ENCODE measurements at regions of chr11 and their contacts with region 1.

Region 1: DNA sequence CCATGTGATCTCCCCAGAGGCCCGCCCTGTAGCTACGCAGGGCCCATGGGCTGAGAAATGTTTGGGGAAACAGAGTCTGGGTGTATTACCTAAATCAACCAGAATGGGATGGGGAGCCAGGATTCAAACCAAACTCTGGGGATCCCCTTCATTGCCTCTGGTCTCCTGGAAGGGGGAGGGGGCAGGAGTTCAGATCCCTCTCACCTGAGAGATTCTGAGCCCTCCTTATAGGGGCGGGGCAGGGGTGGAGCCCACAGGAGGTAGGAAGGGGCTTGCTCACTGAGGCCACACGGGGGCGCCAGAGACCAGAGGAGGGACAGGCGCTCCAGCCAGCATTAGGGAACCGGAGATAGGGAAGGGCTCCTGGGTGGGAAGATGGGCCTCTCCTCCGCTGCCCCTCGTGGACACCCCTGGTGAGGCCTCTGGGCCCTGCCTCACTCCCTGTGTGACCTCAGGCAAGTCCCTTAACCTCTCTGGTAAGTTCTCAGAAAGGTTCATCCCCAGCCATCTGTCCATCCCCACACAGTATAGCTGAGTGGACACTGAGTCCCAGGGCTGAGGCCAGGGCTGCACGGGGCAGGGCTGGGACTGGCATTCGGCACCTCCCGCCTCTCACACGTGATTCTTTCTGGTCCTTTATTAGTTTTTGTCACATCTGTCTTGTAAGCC is 2.7 kb upstream of the CDC42BPG start:
- DNase-seq: no peak
- ATAC-seq: peak; percentile 61
- H3K4me3 ChIP-seq: no peak overlapping the region
- H3K27ac ChIP-seq: no peak overlapping the region
- H3K4me1 ChIP-seq: peaks cover 55% of the 10 kb centered on the region
- H3K27me3 ChIP-seq: no peaks in the 10 kb centered on the region
- CTCF ChIP-seq: peak; percentile 86 to 97 (median 96)
- EP300 ChIP-seq: no peak
- POLR2A ChIP-seq: peak; percentile 36; the same call in 1 of the 2 replicates
- RAD21 ChIP-seq: peak; percentile 90

Region 2: GRCh38 chr11:64204464-64204989 is 642.6 kb before region 1 on chr11:
- CTCF ChIA-PET with region 1: no interaction called
- POLR2A ChIA-PET with region 1: no interaction called
- RAD21 ChIA-PET with region 1: no interaction called
- SMC1A ChIA-PET with region 1: no interaction called
- in situ Hi-C with region 1: no loop called
- intact Hi-C with region 1: no loop called
- DNase-seq: peak; percentile 52
- ATAC-seq: peak; percentile 43
- H3K4me3 ChIP-seq: no peak overlapping the region
- H3K27ac ChIP-seq: peak overlapping the region; percentile 3; the same call in 1 of the 2 replicates
- H3K4me1 ChIP-seq: peaks cover 26% of the 10 kb centered on the region
- H3K27me3 ChIP-seq: no peaks in the 10 kb centered on the region
- CTCF ChIP-seq: peak; percentile 73 to 92 (median 77)
- EP300 ChIP-seq: no peak
- POLR2A ChIP-seq: peak; percentile 34; the same call in 1 of the 2 replicates
- RAD21 ChIP-seq: peak; percentile 82

Region 3: DNA sequence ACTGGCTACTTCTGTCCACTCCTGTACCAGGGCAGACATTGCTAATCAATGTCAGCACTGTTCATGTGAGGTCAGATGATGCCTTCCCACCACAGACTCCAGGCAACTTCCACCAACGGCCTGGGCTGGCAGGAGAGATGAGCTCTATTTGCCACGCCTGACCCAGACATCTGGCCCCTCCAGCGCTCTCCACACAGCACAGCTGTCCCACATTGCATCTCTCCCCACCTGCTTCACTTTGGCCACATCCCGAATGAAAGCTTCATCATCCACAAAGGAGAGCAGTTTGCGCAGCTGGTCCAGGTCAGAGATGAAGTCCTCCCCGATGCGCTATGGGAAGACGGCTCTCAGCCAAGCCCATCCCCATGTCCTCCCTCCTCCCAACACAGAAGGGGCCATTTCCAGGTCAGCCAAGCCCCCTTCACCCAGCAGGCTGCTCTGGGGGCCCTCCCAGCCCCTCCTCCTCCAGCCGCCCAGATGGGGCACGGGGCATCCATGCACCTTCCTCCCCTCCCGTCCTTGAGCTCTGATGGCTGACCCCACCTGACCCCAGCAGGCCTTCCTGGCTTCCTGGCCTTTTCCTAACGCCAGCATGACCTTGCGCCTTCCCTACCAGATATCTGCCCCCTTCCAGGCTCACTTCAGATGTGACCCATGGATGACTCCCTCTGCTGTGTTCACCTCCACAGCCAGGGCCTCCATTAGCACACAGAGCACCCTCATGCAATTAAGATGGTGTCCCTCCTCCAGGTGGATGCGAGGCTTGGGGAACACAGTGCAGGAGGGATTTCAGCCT is 94.8 kb before region 1 on chr11:
- CTCF ChIA-PET with region 1: no interaction called
- POLR2A ChIA-PET with region 1: no interaction called
- RAD21 ChIA-PET with region 1: no interaction called
- SMC1A ChIA-PET with region 1: no interaction called
- in situ Hi-C with region 1: no loop called
- intact Hi-C with region 1: no loop called
- DNase-seq: no peak
- ATAC-seq: no peak
- H3K4me3 ChIP-seq: no peak overlapping the region
- H3K27ac ChIP-seq: no peak overlapping the region
- H3K4me1 ChIP-seq: no peaks in the 10 kb centered on the region
- H3K27me3 ChIP-seq: no peaks in the 10 kb centered on the region
- CTCF ChIP-seq: no peak
- EP300 ChIP-seq: no peak
- POLR2A ChIP-seq: no peak
- RAD21 ChIP-seq: no peak

Region 4: GRCh38 chr11:64803163-64803845 is 43.8 kb before region 1 on chr11 and contains the start of gene MAP4K2:
- CTCF ChIA-PET with region 1: interaction called, 6 read pairs
- POLR2A ChIA-PET with region 1: no interaction called
- RAD21 ChIA-PET with region 1: interaction called, 10 read pairs
- SMC1A ChIA-PET with region 1: interaction called, 4 read pairs
- in situ Hi-C with region 1: no loop called
- intact Hi-C with region 1: no loop called
- DNase-seq: peak; percentile 3
- ATAC-seq: peak; percentile 73
- H3K4me3 ChIP-seq: peak within 1 kb of the TSS; percentile 87
- H3K27ac ChIP-seq: peak within 1 kb of the TSS; percentile 92
- H3K4me1 ChIP-seq: peaks cover 37% of the 10 kb centered on the region
- H3K27me3 ChIP-seq: no peaks in the 10 kb centered on the region
- CTCF ChIP-seq: peak in 2 of 3 experiments; percentile 6 to 25; a peak in 2 of 6 replicates
- EP300 ChIP-seq: no peak
- POLR2A ChIP-seq: peak; percentile 71
- RAD21 ChIP-seq: no peak
- polyA plus RNA-seq, gene MAP4K2: 0.98 to 4.4 TPM

Region 5: GRCh38 chr11:64878494-64879243 is 31.5 kb after region 1 on chr11 and contains the start of gene EHD1:
- CTCF ChIA-PET with region 1: interaction called, 1,208 read pairs
- POLR2A ChIA-PET with region 1: interaction called, 620 read pairs
- RAD21 ChIA-PET with region 1: interaction called, 217 read pairs
- SMC1A ChIA-PET with region 1: interaction called, 227 read pairs
- in situ Hi-C with region 1: no loop called
- intact Hi-C with region 1: loop called (anchors 2 kb)
- DNase-seq: peak; percentile 92
- ATAC-seq: peak; percentile 78
- H3K4me3 ChIP-seq: peak within 1 kb of the TSS; percentile 96
- H3K27ac ChIP-seq: peak within 1 kb of the TSS; percentile 97
- H3K4me1 ChIP-seq: peaks cover 30% of the 10 kb centered on the region
- H3K27me3 ChIP-seq: no peaks in the 10 kb centered on the region
- CTCF ChIP-seq: peak; percentile 41 to 91 (median 54); a peak in 5 of 6 replicates
- EP300 ChIP-seq: 0 out of 4 replicates have a peak, but pooled peaks of 1 of the 2 experiments have one; percentile 35
- POLR2A ChIP-seq: peak; percentile 100
- RAD21 ChIP-seq: no peak
- polyA plus RNA-seq, gene EHD1: 1.0 to 2.2 TPM

Region 6: GRCh38 chr11:64900263-64900678 is 53.1 kb after region 1 on chr11:
- CTCF ChIA-PET with region 1: interaction called, 1,208 read pairs
- POLR2A ChIA-PET with region 1: interaction called, 5 read pairs
- RAD21 ChIA-PET with region 1: interaction called, 101 read pairs
- SMC1A ChIA-PET with region 1: interaction called, 138 read pairs
- in situ Hi-C with region 1: no loop called
- intact Hi-C with region 1: no loop called
- DNase-seq: no peak
- ATAC-seq: peak; percentile 96
- H3K4me3 ChIP-seq: no peak overlapping the region
- H3K27ac ChIP-seq: peak overlapping the region; percentile 46
- H3K4me1 ChIP-seq: peaks cover 9% of the 10 kb centered on the region
- H3K27me3 ChIP-seq: no peaks in the 10 kb centered on the region
- CTCF ChIP-seq: no peak
- EP300 ChIP-seq: 0 out of 4 replicates have a peak, but pooled peaks of 1 of the 2 experiments have one; percentile 19
- POLR2A ChIP-seq: no peak; the same call in 1 of the 2 replicates
- RAD21 ChIP-seq: no peak

Region 7: GRCh38 chr11:65013692-65014145 is 166.6 kb after region 1 on chr11:
- CTCF ChIA-PET with region 1: interaction called, 89 read pairs
- POLR2A ChIA-PET with region 1: interaction called, 3 read pairs
- RAD21 ChIA-PET with region 1: interaction called, 31 read pairs
- SMC1A ChIA-PET with region 1: interaction called, 19 read pairs
- in situ Hi-C with region 1: no loop called
- intact Hi-C with region 1: loop called (anchors 2 kb)
- DNase-seq: peak; percentile 69
- ATAC-seq: peak; percentile 89
- H3K4me3 ChIP-seq: peak overlapping the region; percentile 76
- H3K27ac ChIP-seq: peak overlapping the region; percentile 88
- H3K4me1 ChIP-seq: peaks cover 17% of the 10 kb centered on the region
- H3K27me3 ChIP-seq: no peaks in the 10 kb centered on the region
- CTCF ChIP-seq: peak in 2 of 3 experiments; percentile 51 to 60; a peak in 4 of 6 replicates
- EP300 ChIP-seq: no peak; a peak in 1 of 4 replicates
- POLR2A ChIP-seq: peak; percentile 72
- RAD21 ChIP-seq: peak; percentile 38; the same call in 1 of the 2 replicates

Region 8: GRCh38 chr11:65180877-65181568 is 333.9 kb after region 1 on chr11:
- CTCF ChIA-PET with region 1: interaction called, 7 read pairs
- POLR2A ChIA-PET with region 1: no interaction called
- RAD21 ChIA-PET with region 1: interaction called, 18 read pairs
- SMC1A ChIA-PET with region 1: interaction called, 6 read pairs
- in situ Hi-C with region 1: no loop called
- intact Hi-C with region 1: no loop called
- DNase-seq: peak; percentile 19
- ATAC-seq: peak; percentile 88
- H3K4me3 ChIP-seq: peak overlapping the region; percentile 100
- H3K27ac ChIP-seq: peak overlapping the region; percentile 93
- H3K4me1 ChIP-seq: peaks cover 6% of the 10 kb centered on the region; the same call in 1 of the 2 replicates
- H3K27me3 ChIP-seq: no peaks in the 10 kb centered on the region
- CTCF ChIP-seq: peak; percentile 66 to 83 (median 72)
- EP300 ChIP-seq: no peak
- POLR2A ChIP-seq: no peak
- RAD21 ChIP-seq: peak; percentile 87

Region 9: GRCh38 chr11:65329944-65330403 is 482.8 kb after region 1 on chr11:
- CTCF ChIA-PET with region 1: interaction called, 22 read pairs
- POLR2A ChIA-PET with region 1: interaction called, 9 read pairs
- RAD21 ChIA-PET with region 1: interaction called, 9 read pairs
- SMC1A ChIA-PET with region 1: interaction called, 3 read pairs
- in situ Hi-C with region 1: no loop called
- intact Hi-C with region 1: no loop called
- DNase-seq: peak; percentile 43
- ATAC-seq: peak; percentile 60
- H3K4me3 ChIP-seq: no peak overlapping the region
- H3K27ac ChIP-seq: no peak overlapping the region
- H3K4me1 ChIP-seq: peaks cover 4% of the 10 kb centered on the region; the same call in 1 of the 2 replicates
- H3K27me3 ChIP-seq: no peaks in the 10 kb centered on the region
- CTCF ChIP-seq: peak; percentile 67 to 79 (median 72)
- EP300 ChIP-seq: no peak
- POLR2A ChIP-seq: no peak
- RAD21 ChIP-seq: peak; percentile 48